Activated CD4-positive, alpha-beta T cell treated with anti-CD3 and anti-CD28 coated beads for 36 hours (primary cell): ENCODE measurements at regions of chr3 and their contacts with region 1.

Region 1: GRCh38 chr3:71397046-71397445 is 186.5 kb downstream of the FOXP1 start:
- DNase-seq: peak; percentile 36
- ATAC-seq: no peak
- H3K4me3 Mint-ChIP-seq: no peak overlapping the region
- H3K27ac Mint-ChIP-seq: no peak overlapping the region
- H3K4me1 Mint-ChIP-seq: peaks cover 83% of the 10 kb centered on the region
- H3K27me3 Mint-ChIP-seq: peaks cover 2% of the 10 kb centered on the region

Region 2: DNA sequence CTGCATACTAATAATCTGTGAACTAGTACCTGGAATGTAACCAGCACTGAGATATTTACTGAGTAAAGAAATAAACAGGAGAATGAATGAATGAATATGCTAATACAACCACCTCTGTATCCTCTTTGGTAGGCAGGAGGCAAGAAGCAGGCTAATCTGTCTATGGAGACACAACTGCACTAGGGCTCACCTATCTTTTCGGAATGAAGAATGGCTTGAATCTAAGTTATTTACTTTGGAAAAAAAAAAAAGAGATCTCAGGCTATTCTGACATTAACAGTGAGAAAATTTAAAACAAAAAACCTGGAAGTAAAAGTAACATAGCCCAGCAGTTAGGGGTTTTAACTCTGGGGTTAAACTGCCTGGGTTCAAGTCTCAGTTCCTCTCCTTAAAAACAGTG is 12.3 kb after region 1 on chr3:
- CTCF ChIA-PET with region 1: interaction called, 16 read pairs
- POLR2A ChIA-PET with region 1: no interaction called
- intact Hi-C with region 1: no loop called
- DNase-seq: no peak
- ATAC-seq: no peak
- H3K4me3 Mint-ChIP-seq: no peak overlapping the region
- H3K27ac Mint-ChIP-seq: no peak overlapping the region
- H3K4me1 Mint-ChIP-seq: peaks cover 76% of the 10 kb centered on the region
- H3K27me3 Mint-ChIP-seq: no peaks in the 10 kb centered on the region

Region 3: GRCh38 chr3:71416876-71417275 is 19.8 kb after region 1 on chr3:
- CTCF ChIA-PET with region 1: interaction called, 12 read pairs
- POLR2A ChIA-PET with region 1: interaction called, 3 read pairs
- intact Hi-C with region 1: loop called (anchors 1 kb)
- DNase-seq: peak; percentile 64
- ATAC-seq: peak; percentile 15
- H3K4me3 Mint-ChIP-seq: peak overlapping the region; percentile 51
- H3K27ac Mint-ChIP-seq: peak overlapping the region; percentile 34
- H3K4me1 Mint-ChIP-seq: peaks cover 94% of the 10 kb centered on the region
- H3K27me3 Mint-ChIP-seq: no peaks in the 10 kb centered on the region